Activated naive CD8-positive, alpha-beta T cell treated with anti-CD3 and anti-CD28 coated beads, Interleukin-2, amount 10 ng/mL, durations not matched to agents 7 days and 5 days (primary cell): ENCODE measurements at regions of chr11 and their contacts with region 1.

Region 1: GRCh38 chr11:47766305-47767227 is 575 bp downstream of the FNBP4 start:
- DNase-seq: peak; percentile 79
- ATAC-seq: peak; percentile 31
- H3K4me3 Mint-ChIP-seq: peak overlapping the region; percentile 95
- H3K27ac Mint-ChIP-seq: peak overlapping the region; percentile 99
- H3K4me1 Mint-ChIP-seq: peaks cover 15% of the 10 kb centered on the region
- H3K27me3 Mint-ChIP-seq: no peaks in the 10 kb centered on the region

Region 2: GRCh38 chr11:47791774-47792430 is 25.3 kb after region 1 on chr11:
- POLR2A ChIA-PET with region 1: no interaction called
- DNase-seq: no peak
- ATAC-seq: no peak
- H3K4me3 Mint-ChIP-seq: no peak overlapping the region
- H3K27ac Mint-ChIP-seq: no peak overlapping the region
- H3K4me1 Mint-ChIP-seq: peaks cover 6% of the 10 kb centered on the region
- H3K27me3 Mint-ChIP-seq: no peaks in the 10 kb centered on the region

Region 3: DNA sequence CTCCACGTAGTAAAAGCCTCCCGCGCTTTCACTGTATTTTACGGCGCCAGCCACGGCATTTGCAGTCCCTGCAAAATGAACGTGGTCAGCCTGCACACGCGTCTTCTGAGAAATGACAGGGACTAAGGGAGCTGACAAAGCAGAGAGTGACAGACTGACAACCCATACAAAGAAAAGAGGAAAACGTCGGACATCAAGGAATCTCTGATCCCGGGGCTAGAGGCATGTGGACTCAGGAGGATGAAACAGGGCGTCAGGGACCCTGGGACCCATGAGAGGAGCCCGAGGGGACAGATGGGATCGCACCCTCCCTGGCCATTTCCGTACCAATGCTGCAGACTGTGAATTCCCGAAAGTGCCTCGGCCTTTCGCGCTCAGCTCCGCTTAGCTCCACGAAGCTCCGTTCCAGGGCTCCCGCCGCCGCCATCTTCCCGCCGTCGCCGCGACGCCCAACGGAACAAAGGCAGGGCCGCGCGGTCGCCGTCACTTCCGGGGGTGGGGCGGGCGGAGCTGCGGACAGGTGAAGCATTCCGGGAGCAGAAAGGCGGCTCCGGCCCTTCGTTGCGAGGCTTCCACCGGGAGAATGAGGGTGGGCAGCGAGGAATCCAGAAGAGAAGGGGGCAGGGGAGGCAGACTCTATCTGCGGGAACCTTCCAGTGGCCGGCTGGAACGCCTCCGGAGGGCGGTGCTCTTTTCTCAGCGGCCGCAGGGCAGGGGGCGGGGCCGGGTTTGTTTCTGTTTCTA is 81.5 kb after region 1 on chr11 and contains the start of gene NUP160:
- POLR2A ChIA-PET with region 1: interaction called, 12 read pairs
- DNase-seq: peak; percentile 95
- ATAC-seq: peak; percentile 86
- H3K4me3 Mint-ChIP-seq: peak within 1 kb of the TSS; percentile 95
- H3K27ac Mint-ChIP-seq: peak within 1 kb of the TSS; percentile 97
- H3K4me1 Mint-ChIP-seq: peaks cover 36% of the 10 kb centered on the region
- H3K27me3 Mint-ChIP-seq: no peaks in the 10 kb centered on the region
- total RNA-seq, gene NUP160: 56.7 to 57.0 TPM

Region 4: GRCh38 chr11:47869546-47870393 is 103.2 kb after region 1 on chr11:
- POLR2A ChIA-PET with region 1: no interaction called
- DNase-seq: no peak
- ATAC-seq: no peak
- H3K4me3 Mint-ChIP-seq: no peak overlapping the region
- H3K27ac Mint-ChIP-seq: no peak overlapping the region
- H3K4me1 Mint-ChIP-seq: peaks cover 9% of the 10 kb centered on the region
- H3K27me3 Mint-ChIP-seq: peaks cover 2% of the 10 kb centered on the region